ENCODE measurements at regions of chr12 and their contacts with region 1.

Region 1: DNA sequence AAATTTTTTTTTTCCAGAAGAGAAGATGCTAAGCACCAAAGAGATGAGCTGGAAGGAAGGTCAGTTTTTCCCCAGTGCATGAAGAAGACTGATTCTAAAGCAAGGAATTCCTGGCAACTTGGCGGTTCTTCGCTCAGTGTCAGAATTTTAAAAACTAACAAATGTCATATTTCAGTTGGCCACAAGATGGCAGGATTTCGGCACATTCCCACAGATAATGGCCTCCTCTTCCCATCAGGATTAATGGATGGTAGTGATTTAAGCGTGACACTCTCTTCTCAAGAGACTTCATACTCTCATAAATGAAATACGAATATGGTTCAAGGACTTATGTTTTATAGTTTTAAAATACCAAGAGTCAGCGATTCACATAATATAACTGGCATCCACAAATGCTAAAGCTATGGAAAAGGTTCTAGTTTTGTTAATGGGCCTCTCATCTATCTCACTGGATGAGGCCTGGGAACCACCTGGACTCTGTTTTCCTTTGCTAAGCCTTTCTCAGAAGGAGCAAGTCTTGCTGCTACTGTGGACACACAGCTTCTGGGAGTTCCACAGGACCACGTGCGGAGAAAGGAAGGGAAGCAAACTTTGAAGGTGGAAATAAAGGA is 46.1 kb upstream of the PTPRO start:
- DNase-seq: no peak
- ATAC-seq: peak; percentile 46 to 58
- H3K4me3 ChIP-seq: no peak overlapping the region
- H3K27ac ChIP-seq: no peak overlapping the region
- H3K4me1 ChIP-seq: peaks cover 2% of the 10 kb centered on the region
- H3K27me3 ChIP-seq: no peaks in the 10 kb centered on the region

Region 2: DNA sequence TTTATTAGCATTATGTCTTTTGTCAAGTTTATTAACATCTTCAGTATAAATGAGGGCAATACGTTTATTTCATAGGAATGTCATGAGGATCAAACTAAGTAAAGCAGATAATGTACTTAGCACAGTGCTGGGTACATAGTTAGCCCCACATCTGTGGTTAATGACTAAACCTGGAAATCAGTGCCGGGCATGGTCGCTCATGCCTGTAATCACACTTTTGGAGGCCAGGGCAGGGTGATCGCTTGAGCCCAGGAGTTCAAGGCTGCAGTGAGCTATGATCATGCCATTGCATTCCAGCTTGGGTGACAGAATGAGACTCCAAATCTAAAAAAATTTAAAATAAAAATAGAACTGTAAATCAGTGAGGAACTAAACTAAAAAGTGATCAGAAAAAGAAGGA is 535.0 kb before region 1 on chr12:
- intact Hi-C with region 1: no loop called
- DNase-seq: no peak
- ATAC-seq: no peak
- H3K4me3 ChIP-seq: no peak overlapping the region
- H3K27ac ChIP-seq: no peak overlapping the region
- H3K4me1 ChIP-seq: no peaks in the 10 kb centered on the region
- H3K27me3 ChIP-seq: no peaks in the 10 kb centered on the region

Region 3: GRCh38 chr12:15522565-15523187 is 246.5 kb after region 1 on chr12:
- intact Hi-C with region 1: loop called (anchors 5 to 10 kb)
- DNase-seq: no peak
- ATAC-seq: peak in 1 of 2 donors; percentile 47
- H3K4me3 ChIP-seq: no peak overlapping the region
- H3K27ac ChIP-seq: no peak overlapping the region
- H3K4me1 ChIP-seq: no peaks in the 10 kb centered on the region
- H3K27me3 ChIP-seq: peaks cover 2% of the 10 kb centered on the region

Region 4: DNA sequence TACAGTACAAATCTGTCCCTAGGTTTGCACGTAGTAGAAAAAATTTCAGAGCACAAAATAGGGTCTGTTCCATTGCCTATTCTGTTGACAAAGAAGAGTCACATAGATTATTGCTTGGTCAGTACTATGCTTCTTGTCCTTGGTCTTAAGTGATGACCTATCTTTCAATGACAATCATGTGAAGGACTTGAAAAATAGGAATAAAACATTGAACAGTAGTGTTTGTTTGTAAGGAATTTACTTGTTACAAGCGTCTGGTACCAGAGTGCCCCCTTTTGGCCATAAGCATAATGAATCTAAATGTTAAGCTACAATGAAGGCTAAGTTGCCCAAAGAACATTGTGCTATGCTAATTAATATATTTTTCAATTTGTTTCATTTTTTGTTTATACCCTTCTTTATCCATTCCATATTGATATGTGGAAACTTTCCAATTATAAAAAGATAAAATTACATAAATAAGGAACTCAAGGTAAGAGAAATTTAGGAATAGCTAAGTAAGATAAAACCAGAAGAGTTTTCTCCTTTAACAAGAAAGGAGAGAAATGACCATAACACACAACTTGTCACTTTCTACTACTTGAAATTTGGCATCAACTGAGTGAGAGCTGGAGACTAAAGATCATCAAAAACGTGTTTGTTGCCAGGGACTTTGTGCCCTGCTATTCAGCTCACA is 308.3 kb after region 1 on chr12:
- intact Hi-C with region 1: loop called in 3 of 4 experiments (anchors 5 to 10 kb)
- DNase-seq: no peak
- ATAC-seq: no peak
- H3K4me3 ChIP-seq: no peak overlapping the region
- H3K27ac ChIP-seq: no peak overlapping the region
- H3K4me1 ChIP-seq: no peaks in the 10 kb centered on the region
- H3K27me3 ChIP-seq: no peaks in the 10 kb centered on the region